Posterior vena cava (tissue), 2 donors: ENCODE measurements at regions of chr15 and their contacts with region 1.

Region 1: GRCh38 chr15:93087825-93088199 is 1.2 kb downstream of the RGMA start:
- DNase-seq: peak; percentile 93

Region 2: GRCh38 chr15:93359425-93360131 is 271.8 kb after region 1 on chr15:
- intact Hi-C with region 1: loop called in 1 of 2 experiments (anchors 5 kb)
- DNase-seq: no peak